Aorta (tissue), 5 donors: ENCODE measurements at regions of chr2 and their contacts with region 1.

Region 1: DNA sequence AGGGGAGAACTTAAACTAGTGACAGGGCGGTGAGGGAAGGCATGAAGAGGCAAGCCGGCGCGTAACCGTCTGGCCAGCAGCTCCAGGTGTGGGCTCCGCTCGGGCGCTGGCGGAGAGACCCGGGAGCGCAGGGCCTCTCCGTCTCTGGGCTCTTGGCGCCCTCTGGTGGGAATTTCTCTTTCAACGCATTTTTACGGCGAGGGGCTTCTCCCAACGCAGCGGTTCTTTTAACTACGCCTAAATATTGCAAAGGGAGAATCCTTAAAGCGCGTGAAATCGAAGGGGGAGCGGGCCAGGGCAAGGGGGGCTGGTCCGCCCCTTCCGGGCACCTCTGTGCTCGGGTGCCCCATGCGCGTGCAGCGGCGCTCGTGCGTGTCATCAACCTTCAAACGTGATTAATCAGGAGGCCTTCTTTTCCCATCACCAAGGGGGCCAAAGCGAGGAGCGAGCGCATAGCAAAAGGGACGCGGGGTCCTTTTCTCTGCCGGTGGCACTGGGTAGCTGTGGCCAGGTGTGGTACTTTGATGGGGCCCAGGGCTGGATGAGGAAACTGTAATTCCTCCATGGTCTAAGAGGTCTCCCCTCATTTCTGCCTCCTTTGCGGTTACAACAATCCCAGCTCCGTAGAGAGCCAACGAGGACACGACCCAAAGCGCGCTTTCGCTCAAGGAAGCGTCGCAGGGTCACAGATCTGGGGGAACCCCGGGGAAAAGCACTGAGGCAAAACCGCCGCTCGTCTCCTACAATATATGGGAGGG is 762 bp upstream of the GAD1 start:
- DNase-seq: peak in 1 of 2 donors; percentile 84
- ATAC-seq: peak; percentile 76
- H3K4me3 ChIP-seq: peak overlapping the region; percentile 9 to 82
- H3K27ac ChIP-seq: no peak overlapping the region
- H3K4me1 ChIP-seq: no peaks in the 10 kb centered on the region
- H3K27me3 ChIP-seq: no peaks in the 10 kb centered on the region

Region 2: GRCh38 chr2:170369894-170370293 is 446.0 kb before region 1 on chr2:
- intact Hi-C with region 1: loop called (anchors 2 to 5 kb)
- DNase-seq: no peak
- ATAC-seq: no peak
- H3K4me3 ChIP-seq: no peak overlapping the region
- H3K27ac ChIP-seq: no peak overlapping the region
- H3K4me1 ChIP-seq: no peaks in the 10 kb centered on the region
- H3K27me3 ChIP-seq: no peaks in the 10 kb centered on the region

Region 3: DNA sequence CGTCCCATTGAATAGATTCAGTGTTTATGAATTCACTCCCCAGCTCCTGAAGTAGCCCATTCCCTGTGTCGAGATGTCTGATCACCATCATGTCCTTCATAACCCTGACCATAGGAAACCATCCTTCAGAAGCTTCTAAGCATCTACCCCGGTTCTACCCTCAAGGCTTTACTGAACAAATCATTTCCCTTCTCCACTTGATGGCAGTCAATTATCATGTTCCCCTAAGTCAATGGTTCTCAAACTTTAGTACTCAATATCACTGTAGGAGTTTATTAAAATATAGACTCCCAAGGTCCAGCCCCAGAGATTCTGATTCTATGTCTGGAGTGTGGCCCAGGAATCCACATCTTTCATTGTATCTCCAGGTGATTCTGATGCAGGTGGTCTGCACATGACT is 329.2 kb before region 1 on chr2:
- intact Hi-C with region 1: loop called (anchors 2 kb)
- DNase-seq: no peak
- ATAC-seq: peak; percentile 63
- H3K4me3 ChIP-seq: no peak overlapping the region
- H3K27ac ChIP-seq: no peak overlapping the region
- H3K4me1 ChIP-seq: no peaks in the 10 kb centered on the region
- H3K27me3 ChIP-seq: no peaks in the 10 kb centered on the region

Region 4: GRCh38 chr2:170505631-170506275 is 310.2 kb before region 1 on chr2:
- intact Hi-C with region 1: loop called in 1 of 2 experiments (anchors 5 kb)
- DNase-seq: peak; percentile 87 to 88
- ATAC-seq: peak; percentile 78
- H3K4me3 ChIP-seq: no peak overlapping the region
- H3K27ac ChIP-seq: peak overlapping the region in 1 of 2 donors; percentile 93
- H3K4me1 ChIP-seq: no peaks in the 10 kb centered on the region
- H3K27me3 ChIP-seq: no peaks in the 10 kb centered on the region

Region 5: DNA sequence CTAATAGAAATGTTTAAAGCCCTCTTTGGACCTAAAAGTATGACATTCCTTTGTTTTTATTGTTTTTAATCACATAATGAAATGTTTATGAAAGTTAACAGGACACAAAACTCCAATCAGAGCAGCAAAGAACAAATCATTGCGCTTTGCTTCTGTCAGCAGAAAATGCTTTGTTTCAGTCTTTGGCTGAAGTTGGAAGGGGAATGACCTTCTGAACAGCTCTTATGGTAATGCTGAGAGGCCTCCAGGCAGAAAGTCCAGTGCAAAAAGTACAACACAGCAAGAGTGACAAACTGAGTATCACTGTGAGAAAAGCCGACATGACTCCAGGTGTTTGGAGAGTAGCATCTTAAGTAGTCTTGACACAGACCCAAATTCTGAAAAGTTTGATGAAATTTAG is 248.5 kb before region 1 on chr2:
- intact Hi-C with region 1: loop called in 1 of 2 experiments (anchors 10 kb)
- DNase-seq: no peak
- ATAC-seq: no peak
- H3K4me3 ChIP-seq: no peak overlapping the region
- H3K27ac ChIP-seq: no peak overlapping the region
- H3K4me1 ChIP-seq: peaks cover 0 to 4% of the 10 kb centered on the region in 2 donors
- H3K27me3 ChIP-seq: no peaks in the 10 kb centered on the region

Region 6: GRCh38 chr2:170715062-170715931 is 100.6 kb before region 1 on chr2 and contains the start of gene SP5:
- intact Hi-C with region 1: loop called (anchors 5 kb)
- DNase-seq: peak; percentile 50 to 83
- ATAC-seq: peak; percentile 58
- H3K4me3 ChIP-seq: peak within 1 kb of the TSS; percentile 53 to 56
- H3K27ac ChIP-seq: no peak within 1 kb of the TSS
- H3K4me1 ChIP-seq: no peaks in the 10 kb centered on the region
- H3K27me3 ChIP-seq: no peaks in the 10 kb centered on the region
- total RNA-seq, gene SP5: 3.2 to 3.6 TPM

Region 7: DNA sequence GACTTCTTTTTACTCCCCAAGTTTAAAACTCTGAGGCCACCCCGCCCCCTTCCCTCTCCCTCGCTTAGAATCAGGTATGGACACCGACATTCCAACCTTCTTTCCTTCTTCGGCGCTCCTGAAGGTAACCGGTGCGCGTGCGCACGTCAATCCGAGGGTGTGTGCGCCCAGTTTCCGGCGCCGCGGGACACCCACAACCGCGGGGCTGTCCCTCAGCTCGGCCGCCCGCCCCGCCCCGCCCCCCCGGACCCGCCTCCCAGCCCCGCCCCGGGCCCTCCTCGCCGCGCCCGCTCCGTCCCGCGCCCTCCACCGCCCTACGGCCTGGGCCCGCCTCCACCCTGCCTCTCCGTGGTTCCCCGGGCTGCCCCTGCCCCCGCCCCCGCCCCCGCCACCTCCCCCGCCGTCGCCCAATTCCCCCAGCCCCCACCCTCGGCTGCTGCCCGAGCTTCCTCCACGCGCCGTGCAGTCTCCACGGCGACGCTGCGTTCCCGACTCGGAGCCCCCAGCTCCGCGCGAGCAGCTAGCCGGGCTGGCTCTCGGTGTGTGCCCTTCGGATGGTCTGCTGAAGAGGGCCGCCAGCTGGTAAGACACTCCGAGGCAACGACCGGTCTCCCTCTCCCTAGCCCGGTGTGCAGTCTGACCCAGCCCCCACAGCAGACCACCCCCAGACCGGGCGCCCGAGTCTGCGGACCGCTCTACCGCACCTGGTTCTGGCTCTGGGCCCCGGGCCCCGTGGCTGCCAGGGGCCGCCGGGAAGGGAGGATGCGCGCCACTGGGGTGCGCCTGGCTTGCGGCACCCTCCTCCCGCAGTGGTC is 45.1 kb before region 1 on chr2:
- intact Hi-C with region 1: loop called (anchors 2 to 5 kb)
- DNase-seq: peak; percentile 76 to 91
- ATAC-seq: peak; percentile 94
- H3K4me3 ChIP-seq: peak overlapping the region; percentile 28 to 67
- H3K27ac ChIP-seq: peak overlapping the region in 1 of 2 donors; percentile 22
- H3K4me1 ChIP-seq: no peaks in the 10 kb centered on the region
- H3K27me3 ChIP-seq: no peaks in the 10 kb centered on the region

Region 8: DNA sequence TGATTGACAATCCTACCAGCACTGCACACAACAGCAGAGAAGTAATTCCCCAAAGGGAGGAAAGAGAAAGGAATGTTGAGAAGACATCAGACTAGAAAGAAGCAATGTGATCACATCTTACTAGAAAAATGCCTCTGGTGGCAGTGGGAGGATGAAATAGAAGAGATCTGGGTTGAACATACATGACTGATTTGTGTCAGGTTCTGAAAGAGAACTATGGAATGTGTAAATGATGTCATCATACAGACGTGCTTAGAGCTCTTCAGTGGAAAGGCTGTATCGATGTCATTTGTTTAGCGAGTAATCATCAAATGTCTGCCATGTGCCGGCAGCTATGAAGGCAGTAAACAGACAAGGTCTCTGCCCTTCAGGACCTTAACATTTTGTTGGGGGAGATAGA is 138.0 kb after region 1 on chr2:
- intact Hi-C with region 1: no loop called
- DNase-seq: no peak
- ATAC-seq: no peak
- H3K4me3 ChIP-seq: no peak overlapping the region
- H3K27ac ChIP-seq: no peak overlapping the region
- H3K4me1 ChIP-seq: no peaks in the 10 kb centered on the region
- H3K27me3 ChIP-seq: no peaks in the 10 kb centered on the region